ENCODE measurements at regions of chr1 and their contacts with region 1.

Region 1: GRCh38 chr1:100164216-100164615 is 13.8 kb downstream of the LRRC39 start:
- DNase-seq: no peak
- H3K4me3 ChIP-seq: no peak overlapping the region
- H3K27ac ChIP-seq: no peak overlapping the region
- H3K4me1 ChIP-seq: no peaks in the 10 kb centered on the region
- H3K27me3 ChIP-seq: no peaks in the 10 kb centered on the region
- CTCF ChIP-seq: no peak
- POLR2A ChIP-seq: no peak

Region 2: GRCh38 chr1:99808391-99809115 is 355.7 kb before region 1 on chr1:
- intact Hi-C with region 1: loop called (anchors 10 kb)
- DNase-seq: peak; percentile 45
- H3K4me3 ChIP-seq: no peak overlapping the region
- H3K27ac ChIP-seq: peak overlapping the region in 1 of 2 donors; percentile 55
- H3K4me1 ChIP-seq: peaks cover 9% of the 10 kb centered on the region
- H3K27me3 ChIP-seq: no peaks in the 10 kb centered on the region
- CTCF ChIP-seq: peak; percentile 45 to 69 (median 69)
- POLR2A ChIP-seq: no peak